ENCODE measurements at regions of chr12 and their contacts with region 1.

Region 1: DNA sequence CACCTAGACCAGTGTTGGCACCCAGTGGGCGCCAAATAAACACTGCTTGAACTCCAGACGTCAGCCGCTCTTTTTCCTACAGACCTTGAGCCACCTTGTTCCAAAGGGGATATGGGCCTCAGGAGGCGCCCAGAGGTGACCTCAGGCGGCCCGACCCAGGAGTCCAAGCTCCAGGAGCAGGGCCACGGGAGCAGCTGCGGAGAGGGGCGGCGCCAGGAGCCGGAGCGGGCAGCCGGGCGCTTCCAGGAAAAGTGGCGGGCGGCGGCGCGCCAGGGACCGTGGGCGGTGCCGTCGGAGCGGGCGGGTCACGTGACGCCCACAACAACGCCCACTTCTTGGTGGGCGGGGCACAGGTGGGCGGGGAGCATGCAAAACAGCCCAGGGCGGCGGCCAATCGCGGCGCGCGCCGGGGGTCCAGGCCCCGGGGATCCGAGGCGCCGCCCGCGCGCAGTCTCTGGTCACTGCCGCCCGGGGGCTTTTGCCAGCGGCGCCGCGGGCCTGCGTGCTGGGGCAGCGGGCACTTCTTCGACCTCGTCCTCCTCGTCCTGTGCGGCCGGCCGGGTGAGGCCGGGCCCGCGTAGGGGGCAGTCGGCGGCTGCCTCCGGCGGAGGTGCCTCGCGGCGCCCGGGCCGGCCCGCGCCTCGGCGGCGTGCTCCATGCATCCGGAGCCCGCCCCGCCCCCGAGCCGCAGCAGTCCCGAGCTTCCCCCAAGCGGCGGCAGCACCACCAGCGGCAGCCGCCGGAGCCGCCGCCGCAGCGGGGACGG is at the start of gene ORAI1:
- DNase-seq: peak; percentile 99
- H3K4me3 Mint-ChIP-seq: peak within 1 kb of the TSS; percentile 86
- H3K27ac Mint-ChIP-seq: peak within 1 kb of the TSS; percentile 97
- H3K4me1 Mint-ChIP-seq: peaks cover 38% of the 10 kb centered on the region
- H3K27me3 Mint-ChIP-seq: no peaks in the 10 kb centered on the region
- total RNA-seq, gene ORAI1: 58.3 and 61.8 TPM in 2 replicates

Region 2: DNA sequence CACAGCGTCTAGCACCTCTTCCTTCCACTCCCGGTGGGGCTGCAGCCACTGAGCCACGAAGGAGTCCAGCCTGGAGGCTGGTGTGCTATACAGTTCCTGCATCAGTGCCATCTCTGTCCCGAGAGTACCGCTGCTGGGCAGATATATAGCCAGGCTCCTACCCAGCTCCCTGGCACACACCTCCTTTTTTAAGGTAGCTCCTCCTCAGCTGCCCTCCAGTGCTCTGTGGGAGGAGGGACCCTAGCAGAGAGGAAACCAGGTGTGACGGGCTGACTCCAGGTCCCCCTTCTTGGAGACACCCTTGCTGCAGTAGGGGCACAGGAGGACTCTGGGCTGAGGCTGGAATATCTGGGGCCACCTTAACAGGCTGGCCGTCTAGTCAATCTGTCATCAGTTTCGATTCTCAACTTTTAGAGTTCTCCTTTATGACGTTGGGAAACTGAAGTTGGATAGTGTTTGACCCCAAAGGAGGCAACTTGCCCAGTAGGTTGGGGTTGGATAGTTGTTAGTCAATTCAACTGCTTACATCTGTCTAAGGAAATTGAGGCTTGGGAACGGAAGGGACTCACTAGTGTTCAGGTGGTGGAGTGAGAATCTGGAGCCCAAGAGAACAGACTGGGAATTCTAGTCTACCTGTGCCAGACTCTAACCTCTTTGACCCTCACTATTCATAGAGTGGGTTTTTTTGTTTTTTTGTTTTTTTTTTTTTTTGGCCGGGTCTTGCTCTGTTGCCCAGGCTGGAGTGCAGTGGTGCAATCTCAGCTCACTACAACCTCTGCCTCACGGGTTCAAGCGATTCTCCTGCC is 587.2 kb before region 1 on chr12 and contains the start of gene OASL:
- intact Hi-C with region 1: no loop called
- DNase-seq: peak; percentile 89
- H3K4me3 Mint-ChIP-seq: peak within 1 kb of the TSS; percentile 89
- H3K27ac Mint-ChIP-seq: peak within 1 kb of the TSS; percentile 85
- H3K4me1 Mint-ChIP-seq: peaks cover 44% of the 10 kb centered on the region
- H3K27me3 Mint-ChIP-seq: peaks cover 13% of the 10 kb centered on the region
- total RNA-seq, gene OASL: 2.9 and 3.0 TPM in 2 replicates

Region 3: DNA sequence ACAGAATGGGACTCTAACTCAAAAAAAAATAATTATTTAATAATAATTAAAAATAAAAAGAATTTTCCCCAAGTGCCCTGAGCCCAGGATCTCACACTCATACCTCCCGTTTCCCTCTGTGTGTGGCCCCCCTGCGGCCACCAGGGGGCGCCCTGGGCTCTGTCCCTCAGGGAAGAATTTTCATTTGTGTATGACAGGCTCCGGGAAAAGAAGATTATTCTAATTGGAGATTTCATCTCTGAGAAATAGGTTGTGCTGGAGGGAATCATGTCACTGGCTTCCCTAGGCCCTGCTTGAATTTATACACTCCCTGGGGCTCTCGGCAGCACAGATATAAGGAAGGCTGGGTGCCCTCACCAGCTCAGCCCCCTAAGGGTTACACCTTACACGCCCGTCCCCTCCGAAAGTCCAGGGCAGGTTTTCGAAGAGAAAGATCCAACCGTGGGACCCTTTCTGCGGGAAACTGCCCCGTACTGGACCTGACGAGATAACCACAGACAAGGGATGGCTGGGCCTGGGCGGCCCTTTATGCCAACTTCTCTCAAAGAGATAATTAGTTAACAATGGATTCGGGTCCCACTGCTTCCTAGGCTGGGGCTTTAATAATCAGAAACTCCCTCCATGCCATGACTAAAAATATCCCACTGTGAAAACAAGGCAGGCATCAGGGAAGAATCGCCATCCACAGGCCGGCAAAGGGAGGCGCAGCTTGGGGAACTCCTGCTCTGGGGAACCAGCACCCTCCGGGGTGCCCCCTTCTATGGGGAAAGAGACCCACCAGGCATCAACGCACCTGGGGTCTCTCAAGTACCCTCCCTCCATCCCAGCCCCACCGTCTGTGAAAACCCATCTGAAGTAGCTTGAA is 126.1 kb before region 1 on chr12:
- intact Hi-C with region 1: loop called (anchors 1 kb)
- DNase-seq: peak; percentile 92
- H3K4me3 Mint-ChIP-seq: no peak overlapping the region
- H3K27ac Mint-ChIP-seq: no peak overlapping the region
- H3K4me1 Mint-ChIP-seq: peaks cover 11% of the 10 kb centered on the region
- H3K27me3 Mint-ChIP-seq: no peaks in the 10 kb centered on the region

Region 4: GRCh38 chr12:121550974-121551634 is 75.2 kb before region 1 on chr12:
- intact Hi-C with region 1: loop called (anchors 1 kb)
- DNase-seq: no peak
- H3K4me3 Mint-ChIP-seq: no peak overlapping the region
- H3K27ac Mint-ChIP-seq: no peak overlapping the region
- H3K4me1 Mint-ChIP-seq: peaks cover 4% of the 10 kb centered on the region
- H3K27me3 Mint-ChIP-seq: no peaks in the 10 kb centered on the region

Region 5: DNA sequence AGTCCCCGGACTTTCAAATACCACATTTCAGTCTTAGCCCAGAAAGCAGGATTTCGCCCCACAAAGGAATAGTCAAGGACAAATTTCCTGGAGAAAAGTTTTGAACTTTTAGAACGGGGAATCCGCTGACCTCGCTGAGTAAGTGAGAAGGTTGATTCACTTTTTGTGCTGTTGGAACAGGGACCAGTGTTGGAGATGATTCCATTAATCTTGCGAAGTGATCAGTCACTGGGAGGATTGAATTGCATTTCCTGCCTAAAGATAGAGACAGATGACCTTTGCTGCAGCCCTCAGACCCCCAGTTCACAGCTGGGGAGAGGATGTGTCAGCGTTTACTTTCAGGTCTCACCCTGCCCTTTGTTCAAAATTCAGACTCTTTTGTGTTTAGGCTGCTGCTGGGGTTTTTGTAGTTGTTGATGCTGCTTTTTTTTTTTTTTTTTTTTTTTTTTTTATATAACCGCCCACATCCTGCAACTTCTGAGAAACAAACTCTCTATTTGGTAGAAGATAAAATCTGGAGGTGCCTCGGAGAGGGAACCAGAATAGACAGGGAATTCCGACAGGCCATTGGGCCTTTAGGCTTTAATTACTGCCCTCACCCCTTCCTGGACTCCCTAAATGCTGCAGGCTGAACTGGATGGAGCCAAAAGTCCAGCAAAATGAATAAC is 35.7 kb before region 1 on chr12:
- intact Hi-C with region 1: loop called (anchors 1 kb)
- DNase-seq: peak; percentile 91
- H3K4me3 Mint-ChIP-seq: peak overlapping the region; percentile 84
- H3K27ac Mint-ChIP-seq: peak overlapping the region; percentile 97
- H3K4me1 Mint-ChIP-seq: peaks cover 40% of the 10 kb centered on the region
- H3K27me3 Mint-ChIP-seq: no peaks in the 10 kb centered on the region

Region 6: DNA sequence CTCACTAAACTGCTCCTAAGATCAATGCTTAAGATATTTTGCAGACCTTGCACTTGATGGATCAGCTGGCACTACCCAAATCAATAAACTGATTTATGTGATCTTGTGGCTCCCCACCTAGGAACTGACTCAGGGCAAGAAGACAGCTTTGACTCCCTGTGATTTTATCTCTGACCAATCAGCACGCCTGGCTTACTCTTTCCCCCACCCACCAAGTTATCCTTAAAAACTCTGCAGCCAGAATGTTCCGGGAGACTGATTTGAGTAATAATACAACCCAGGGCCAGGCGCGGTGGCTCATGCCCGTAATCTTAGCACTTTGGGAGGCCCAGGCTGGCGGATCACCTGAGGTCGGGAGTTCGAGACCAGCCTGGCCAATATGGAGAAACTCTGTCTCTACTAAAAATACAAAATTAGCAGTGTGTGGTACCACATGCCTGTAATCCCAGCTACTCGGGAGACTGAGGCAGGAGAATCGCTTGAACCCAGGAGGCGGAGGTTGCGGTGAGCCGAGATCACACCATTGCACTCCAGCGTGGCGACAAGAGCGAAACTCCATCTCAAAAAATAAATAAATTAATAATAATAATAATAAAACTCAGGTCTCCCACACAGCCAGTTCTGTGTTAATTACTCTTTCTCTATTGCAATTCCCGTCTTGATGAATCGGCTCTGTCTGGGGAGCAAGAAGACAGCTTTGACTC is 31.2 kb after region 1 on chr12:
- intact Hi-C with region 1: loop called (anchors 1 kb)
- DNase-seq: peak; percentile 71
- H3K4me3 Mint-ChIP-seq: peak overlapping the region; percentile 45
- H3K27ac Mint-ChIP-seq: peak overlapping the region; percentile 48
- H3K4me1 Mint-ChIP-seq: peaks cover 57% of the 10 kb centered on the region
- H3K27me3 Mint-ChIP-seq: no peaks in the 10 kb centered on the region

Region 7: GRCh38 chr12:121688966-121689365 is 62.7 kb after region 1 on chr12:
- intact Hi-C with region 1: loop called (anchors 1 kb)
- DNase-seq: no peak
- H3K4me3 Mint-ChIP-seq: no peak overlapping the region
- H3K27ac Mint-ChIP-seq: peak overlapping the region; percentile 34
- H3K4me1 Mint-ChIP-seq: peaks cover 4% of the 10 kb centered on the region
- H3K27me3 Mint-ChIP-seq: peaks cover 6% of the 10 kb centered on the region

Measured in activated CD4-positive, alpha-beta T cell treated with anti-CD3 and anti-CD28 coated beads, Interleukin-2, amount 10 ng/mL, durations not matched to agents 24 days and 14 days (primary cell).